PC-3 (cell line): ENCODE measurements at regions of chr5 and their contacts with region 1.

Region 1: DNA sequence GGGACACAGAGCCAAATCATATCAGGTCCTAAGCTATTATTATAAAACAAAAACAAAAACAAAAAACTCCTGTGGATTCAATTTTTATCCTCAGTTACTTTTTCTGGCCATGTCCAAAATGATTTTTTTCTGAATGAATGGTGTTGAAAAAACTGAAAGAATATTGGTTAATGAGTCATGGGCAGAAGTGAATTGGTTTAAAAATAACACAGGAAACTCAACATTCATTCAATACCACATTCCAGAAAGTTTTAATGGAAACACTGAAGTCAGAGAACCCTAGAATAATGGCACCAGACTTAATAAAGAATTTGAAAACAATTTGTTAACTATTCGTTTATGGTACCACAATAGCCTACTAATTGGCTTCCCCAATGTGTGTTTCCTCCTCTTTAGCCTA is 102.4 kb upstream of the CDH9 start:
- DNase-seq: no peak
- ATAC-seq: no peak
- H3K4me3 ChIP-seq: no peak overlapping the region
- H3K27ac ChIP-seq: no peak overlapping the region
- H3K4me1 ChIP-seq: peaks cover 10% of the 10 kb centered on the region
- H3K27me3 ChIP-seq: no peaks in the 10 kb centered on the region
- CTCF ChIP-seq: no peak

Region 2: GRCh38 chr5:26518065-26518464 is 622.8 kb before region 1 on chr5:
- CTCF ChIA-PET with region 1: no interaction called
- POLR2A ChIA-PET with region 1: no interaction called
- intact Hi-C with region 1: no loop called
- DNase-seq: no peak
- ATAC-seq: no peak
- H3K4me3 ChIP-seq: no peak overlapping the region
- H3K27ac ChIP-seq: no peak overlapping the region
- H3K4me1 ChIP-seq: no peaks in the 10 kb centered on the region
- H3K27me3 ChIP-seq: no peaks in the 10 kb centered on the region
- CTCF ChIP-seq: no peak

Region 3: DNA sequence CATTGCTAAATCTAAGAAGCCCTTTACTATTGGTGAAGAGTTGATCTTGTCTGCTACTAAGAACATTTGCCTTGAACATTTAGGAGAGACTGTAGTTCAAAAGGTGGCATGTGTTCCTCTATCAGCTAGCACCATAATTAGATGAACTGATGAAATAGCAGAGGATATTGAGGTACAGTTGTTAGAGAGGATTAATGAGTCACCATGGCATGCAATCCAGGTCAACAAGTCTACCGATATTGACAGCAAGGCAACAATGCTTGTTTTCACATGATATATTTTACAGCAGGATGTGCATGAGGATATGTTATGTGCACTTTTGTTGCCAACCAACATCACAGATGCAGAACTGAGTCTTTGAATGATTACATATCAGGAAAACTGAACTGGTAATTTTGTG is 31.9 kb after region 1 on chr5:
- CTCF ChIA-PET with region 1: no interaction called
- POLR2A ChIA-PET with region 1: no interaction called
- intact Hi-C with region 1: no loop called
- DNase-seq: no peak
- ATAC-seq: no peak
- H3K4me3 ChIP-seq: no peak overlapping the region
- H3K27ac ChIP-seq: no peak overlapping the region
- H3K4me1 ChIP-seq: no peaks in the 10 kb centered on the region
- H3K27me3 ChIP-seq: no peaks in the 10 kb centered on the region
- CTCF ChIP-seq: no peak

Region 4: GRCh38 chr5:27609000-27609399 is 468.2 kb after region 1 on chr5:
- CTCF ChIA-PET with region 1: no interaction called
- POLR2A ChIA-PET with region 1: no interaction called
- intact Hi-C with region 1: loop called (anchors 10 kb)
- DNase-seq: no peak
- ATAC-seq: no peak
- H3K4me3 ChIP-seq: no peak overlapping the region
- H3K27ac ChIP-seq: no peak overlapping the region
- H3K4me1 ChIP-seq: 0 out of 2 replicates have a peak, but pooled peaks cover 7% of the 10 kb centered on the region
- H3K27me3 ChIP-seq: no peaks in the 10 kb centered on the region
- CTCF ChIP-seq: no peak